Mammary epithelial cell (primary cell): ENCODE measurements at regions of chr19 and their contacts with region 1.

Region 1: DNA sequence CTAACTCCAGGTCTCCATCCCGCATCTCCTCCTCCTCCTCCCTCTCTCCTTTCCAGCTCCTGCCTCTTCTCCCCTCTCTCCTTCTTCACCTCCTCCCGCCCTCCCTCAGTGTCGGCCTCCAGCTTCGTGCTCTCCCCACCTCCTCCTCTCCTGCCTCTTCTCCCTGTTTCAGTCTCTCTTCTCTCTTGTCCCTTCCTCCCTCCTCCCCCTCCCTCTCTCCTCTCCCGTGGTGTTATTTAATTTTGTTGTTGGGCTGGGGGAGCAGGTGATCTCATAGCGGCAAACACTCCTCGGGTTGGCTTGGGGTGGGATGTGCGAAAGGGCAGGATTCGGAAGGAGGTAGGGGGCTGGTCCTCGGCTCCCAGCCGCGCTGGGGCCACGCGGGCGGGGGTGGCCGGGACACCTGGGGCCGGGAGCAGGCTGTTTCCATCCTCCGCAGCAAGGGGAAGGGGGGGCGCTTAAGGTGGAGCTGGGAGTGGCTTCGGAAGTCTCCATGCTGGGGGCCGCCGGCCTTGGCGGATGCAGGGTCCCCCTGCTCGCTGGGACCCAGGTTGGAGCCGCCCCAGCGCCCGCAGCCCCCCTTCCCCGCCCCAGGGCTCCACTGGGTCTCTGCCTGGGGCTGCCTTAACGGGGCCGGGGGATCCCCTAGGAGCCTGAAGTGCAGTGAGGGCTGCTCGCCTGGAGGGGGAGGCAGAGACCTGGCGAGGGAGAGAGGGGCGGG is at the start of gene CA11:
- DNase-seq: peak; percentile 68
- H3K4me3 ChIP-seq: peak within 1 kb of the TSS; percentile 53 to 54 (median 54)
- H3K27ac ChIP-seq: no peak within 1 kb of the TSS
- H3K4me1 ChIP-seq: peaks cover 17% of the 10 kb centered on the region
- H3K27me3 ChIP-seq: no peaks in the 10 kb centered on the region
- CTCF ChIP-seq: peak; percentile 52 to 93
- total RNA-seq, gene CA11: 3.0 to 3.5 TPM

Region 2: DNA sequence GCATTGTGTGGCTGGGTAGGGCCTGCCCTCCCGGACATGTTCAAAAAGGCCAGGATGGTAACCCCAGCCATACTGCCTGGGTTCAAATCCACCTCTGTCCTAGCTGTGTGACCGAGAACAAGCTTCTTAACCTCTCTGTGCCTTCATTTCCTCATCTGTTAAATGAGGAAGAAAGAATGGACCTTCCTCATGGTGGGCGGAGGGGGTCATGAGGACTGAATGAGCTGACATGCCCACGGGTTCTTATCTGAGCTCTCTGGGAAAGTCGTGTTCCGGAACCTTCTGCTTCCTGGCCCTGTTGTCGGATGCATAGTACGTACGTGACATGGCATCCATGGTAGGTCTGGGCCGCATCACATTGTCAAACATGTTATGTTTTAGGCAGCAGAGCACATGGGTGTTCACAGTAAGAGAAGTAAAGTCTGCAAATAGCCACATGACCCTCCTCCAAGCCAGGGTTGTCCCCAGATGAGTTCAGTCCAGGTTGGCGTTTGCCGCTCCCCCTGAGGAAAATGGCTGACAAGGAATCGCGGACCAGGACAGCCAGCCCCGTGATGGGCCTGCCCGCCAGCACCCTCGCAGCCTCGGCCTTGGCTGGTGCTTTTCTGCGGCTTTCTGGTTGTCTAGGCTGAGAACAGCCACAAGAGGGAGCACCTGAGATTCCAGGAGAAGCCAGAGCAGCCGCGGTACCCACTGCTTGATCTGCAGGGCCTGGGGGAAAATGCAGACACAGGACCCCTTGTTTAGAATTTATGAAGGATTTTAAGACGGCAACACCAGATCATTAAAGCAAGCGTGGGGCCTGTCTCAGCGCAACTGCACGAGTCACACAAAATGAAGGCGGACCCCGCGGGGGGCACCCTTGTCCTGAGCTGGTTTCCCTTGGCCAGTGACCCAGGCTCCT is 29.0 kb after region 1 on chr19:
- CTCF ChIA-PET with region 1: no interaction called
- dilution Hi-C with region 1: no loop called
- in situ Hi-C with region 1: no loop called
- intact Hi-C with region 1: loop called (anchors 1 kb)
- DNase-seq: peak; percentile 70
- H3K4me3 ChIP-seq: no peak overlapping the region
- H3K27ac ChIP-seq: no peak overlapping the region
- H3K4me1 ChIP-seq: peaks cover 4% of the 10 kb centered on the region
- H3K27me3 ChIP-seq: no peaks in the 10 kb centered on the region
- CTCF ChIP-seq: peak; percentile 79 to 85

Region 3: DNA sequence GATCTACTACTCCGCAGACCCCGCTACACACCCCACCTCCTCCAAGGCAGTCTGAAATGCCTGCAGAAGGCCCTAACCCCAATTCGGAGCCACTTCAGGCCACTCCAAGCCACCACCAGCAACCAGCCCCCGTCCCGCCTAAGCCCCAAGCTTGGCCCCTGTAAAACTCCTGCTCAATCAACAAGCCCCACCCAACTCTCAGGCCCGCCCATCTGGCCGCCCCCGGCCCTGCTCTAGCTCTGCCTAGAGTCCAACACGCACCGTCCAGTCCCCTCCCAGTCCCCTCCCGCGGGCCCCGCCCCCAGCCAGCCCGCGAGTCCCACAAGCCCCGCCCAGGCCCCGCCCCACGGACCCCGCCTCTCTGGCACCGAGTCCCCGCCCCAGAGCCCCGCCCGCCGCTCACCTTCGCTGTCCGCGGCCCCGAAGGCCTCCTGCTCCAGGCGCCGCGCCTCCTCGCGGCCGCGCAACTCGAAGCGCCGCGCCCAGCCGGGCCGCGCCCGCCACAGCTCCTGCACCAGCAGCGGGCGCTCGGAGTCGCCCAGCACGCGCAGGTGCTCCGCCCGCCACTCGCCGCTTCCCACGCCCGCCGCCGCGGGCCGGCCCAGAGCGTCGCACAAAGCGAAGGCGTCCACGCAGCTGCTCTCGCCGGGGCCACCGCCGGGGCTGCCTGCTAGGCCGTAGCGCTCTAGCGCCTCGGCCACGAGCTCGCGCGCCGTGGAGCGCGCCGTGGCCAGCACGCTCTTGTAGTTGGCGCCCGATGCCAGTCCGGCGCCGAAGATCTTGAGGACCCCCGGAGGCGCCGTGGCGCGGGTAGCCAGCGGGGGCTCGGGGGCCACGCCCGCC is 92.6 kb after region 1 on chr19:
- CTCF ChIA-PET with region 1: no interaction called
- dilution Hi-C with region 1: no loop called
- in situ Hi-C with region 1: no loop called
- intact Hi-C with region 1: loop called (anchors 5 kb)
- DNase-seq: peak; percentile 86
- H3K4me3 ChIP-seq: peak overlapping the region; percentile 9 to 49 (median 49)
- H3K27ac ChIP-seq: no peak overlapping the region
- H3K4me1 ChIP-seq: peaks cover 6% of the 10 kb centered on the region
- H3K27me3 ChIP-seq: no peaks in the 10 kb centered on the region
- CTCF ChIP-seq: peak in 1 of 2 donors; percentile 34

Region 4: DNA sequence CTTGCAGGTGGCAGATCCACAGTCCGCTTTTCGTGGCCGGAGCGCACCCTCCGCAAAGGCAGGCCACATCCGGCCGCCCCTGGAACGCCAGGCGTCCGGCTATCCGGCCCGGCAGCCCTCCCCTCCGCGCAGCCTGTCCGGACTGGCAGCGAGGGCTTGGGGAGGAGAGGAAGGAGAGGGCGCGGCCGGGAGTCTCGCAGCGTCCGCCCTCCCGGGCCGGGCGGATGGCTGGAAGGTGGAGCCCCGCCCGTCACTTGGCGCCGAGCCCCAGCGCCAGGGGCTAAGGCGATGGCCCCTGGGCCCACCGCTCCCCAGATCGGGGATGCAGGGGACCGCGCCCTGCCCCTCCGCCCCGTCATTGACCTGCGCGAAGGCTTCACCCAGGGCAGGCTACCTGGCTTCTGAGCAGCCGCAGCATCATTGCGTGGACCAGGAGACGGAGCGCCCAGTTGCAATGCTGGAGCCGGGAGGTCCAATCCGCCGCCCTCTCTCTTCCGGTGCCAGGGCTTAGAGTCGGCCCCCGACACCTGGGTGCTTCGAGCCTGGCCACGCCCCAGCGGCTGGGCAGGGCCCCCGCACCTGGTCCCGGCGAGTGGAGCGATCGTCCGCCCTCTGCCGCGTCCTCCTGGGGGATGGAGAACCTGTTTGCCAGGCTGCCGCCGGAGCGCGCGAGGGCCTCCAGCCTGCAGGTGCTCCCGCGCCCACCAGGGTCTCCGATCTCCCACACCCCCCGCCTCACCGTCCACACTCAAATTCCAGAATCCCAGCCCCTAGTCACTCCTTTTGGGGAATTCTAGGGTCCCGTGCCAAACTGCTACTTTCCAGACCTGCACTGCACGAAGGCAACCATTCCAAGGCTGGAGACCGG is 106.6 kb after region 1 on chr19 and contains the start of gene FUT1:
- CTCF ChIA-PET with region 1: no interaction called
- dilution Hi-C with region 1: no loop called
- in situ Hi-C with region 1: no loop called
- intact Hi-C with region 1: loop called (anchors 5 kb)
- DNase-seq: peak; percentile 97
- H3K4me3 ChIP-seq: peak within 1 kb of the TSS; percentile 68 to 85 (median 81)
- H3K27ac ChIP-seq: peak within 1 kb of the TSS; percentile 51
- H3K4me1 ChIP-seq: peaks cover 4% of the 10 kb centered on the region
- H3K27me3 ChIP-seq: no peaks in the 10 kb centered on the region
- CTCF ChIP-seq: peak in 1 of 2 donors; percentile 5
- total RNA-seq, gene FUT1: 13.9 to 15.2 TPM

Region 5: DNA sequence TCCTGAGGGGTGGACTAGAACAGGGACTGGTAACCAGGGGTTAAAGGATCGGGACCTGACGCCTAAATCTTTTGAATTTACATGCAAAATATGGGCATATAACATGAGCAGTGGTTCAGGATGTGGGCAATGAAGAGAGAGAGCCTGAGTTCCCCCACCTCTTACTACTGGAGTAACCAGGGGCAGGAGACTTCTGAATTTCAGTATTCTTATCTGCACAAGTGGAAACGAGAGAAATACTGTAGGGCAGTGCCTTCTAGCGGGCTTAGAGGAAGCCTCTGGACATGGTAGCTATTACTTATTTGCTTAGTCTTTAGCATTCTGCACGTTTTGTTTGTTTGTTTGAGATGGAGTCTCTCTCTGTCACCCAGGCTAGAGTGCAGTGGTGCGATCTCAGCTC is 138.4 kb after region 1 on chr19:
- CTCF ChIA-PET with region 1: no interaction called
- dilution Hi-C with region 1: no loop called
- in situ Hi-C with region 1: no loop called
- intact Hi-C with region 1: loop called (anchors 1 kb)
- DNase-seq: no peak
- H3K4me3 ChIP-seq: no peak overlapping the region
- H3K27ac ChIP-seq: no peak overlapping the region
- H3K4me1 ChIP-seq: peaks cover 8% of the 10 kb centered on the region
- H3K27me3 ChIP-seq: no peaks in the 10 kb centered on the region
- CTCF ChIP-seq: no peak

Region 6: DNA sequence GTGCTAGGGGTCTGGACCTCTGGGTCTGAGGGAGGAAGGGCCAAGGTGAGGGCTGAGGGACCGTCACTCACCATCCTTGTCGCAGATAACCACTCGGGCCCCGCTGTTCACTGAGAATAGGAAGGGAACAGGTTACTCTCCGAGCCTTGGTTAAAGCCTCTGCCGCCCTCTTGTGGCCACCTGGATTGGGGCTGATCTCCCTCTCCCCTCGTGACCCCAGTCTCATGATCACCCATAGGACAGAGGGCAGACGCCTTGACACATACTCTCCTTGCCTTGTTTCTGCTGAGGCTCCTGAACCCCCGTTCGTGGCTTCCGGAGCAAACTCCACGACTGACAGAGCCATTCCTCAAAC is 189.6 kb after region 1 on chr19:
- CTCF ChIA-PET with region 1: no interaction called
- dilution Hi-C with region 1: no loop called
- in situ Hi-C with region 1: loop called (anchors 10 kb)
- intact Hi-C with region 1: loop called (anchors 1 kb)
- DNase-seq: peak; percentile 76
- H3K4me3 ChIP-seq: peak overlapping the region in 1 of 3 experiments; percentile 24
- H3K27ac ChIP-seq: no peak overlapping the region
- H3K4me1 ChIP-seq: peaks cover 5% of the 10 kb centered on the region
- H3K27me3 ChIP-seq: no peaks in the 10 kb centered on the region
- CTCF ChIP-seq: peak; percentile 92 to 95

Region 7: GRCh38 chr19:48965040-48965805 is 319.1 kb after region 1 on chr19 and contains the start of gene FTL:
- CTCF ChIA-PET with region 1: no interaction called
- dilution Hi-C with region 1: no loop called
- in situ Hi-C with region 1: no loop called
- intact Hi-C with region 1: loop called (anchors 10 kb)
- DNase-seq: peak; percentile 80
- H3K4me3 ChIP-seq: peak within 1 kb of the TSS; percentile 51 to 62 (median 52)
- H3K27ac ChIP-seq: peak within 1 kb of the TSS; percentile 7
- H3K4me1 ChIP-seq: peaks cover 27% of the 10 kb centered on the region
- H3K27me3 ChIP-seq: no peaks in the 10 kb centered on the region
- CTCF ChIP-seq: no peak
- total RNA-seq, gene FTL: 186 to 287 TPM